Ascending aorta (tissue), 2 donors: ENCODE measurements at regions of chr19 and their contacts with region 1.

Region 1: GRCh38 chr19:47348819-47349795 is at the start of gene DHX34:
- DNase-seq: peak; percentile 94 to 99
- H3K4me3 ChIP-seq: peak within 1 kb of the TSS; percentile 80 to 90
- H3K27ac ChIP-seq: peak within 1 kb of the TSS; percentile 66 to 67
- H3K4me1 ChIP-seq: peaks cover 0 to 12% of the 10 kb centered on the region in 2 donors
- H3K27me3 ChIP-seq: no peaks in the 10 kb centered on the region
- CTCF ChIP-seq: peak; percentile 98 to 99 (median 98)
- total RNA-seq, gene DHX34: 8.0 TPM

Region 2: GRCh38 chr19:47089767-47090350 is 259.2 kb before region 1 on chr19:
- intact Hi-C with region 1: no loop called
- DNase-seq: no peak
- H3K4me3 ChIP-seq: no peak overlapping the region
- H3K27ac ChIP-seq: no peak overlapping the region
- H3K4me1 ChIP-seq: peaks cover under 1 to 3% of the 10 kb centered on the region in 2 donors
- H3K27me3 ChIP-seq: no peaks in the 10 kb centered on the region
- CTCF ChIP-seq: no peak

Region 3: DNA sequence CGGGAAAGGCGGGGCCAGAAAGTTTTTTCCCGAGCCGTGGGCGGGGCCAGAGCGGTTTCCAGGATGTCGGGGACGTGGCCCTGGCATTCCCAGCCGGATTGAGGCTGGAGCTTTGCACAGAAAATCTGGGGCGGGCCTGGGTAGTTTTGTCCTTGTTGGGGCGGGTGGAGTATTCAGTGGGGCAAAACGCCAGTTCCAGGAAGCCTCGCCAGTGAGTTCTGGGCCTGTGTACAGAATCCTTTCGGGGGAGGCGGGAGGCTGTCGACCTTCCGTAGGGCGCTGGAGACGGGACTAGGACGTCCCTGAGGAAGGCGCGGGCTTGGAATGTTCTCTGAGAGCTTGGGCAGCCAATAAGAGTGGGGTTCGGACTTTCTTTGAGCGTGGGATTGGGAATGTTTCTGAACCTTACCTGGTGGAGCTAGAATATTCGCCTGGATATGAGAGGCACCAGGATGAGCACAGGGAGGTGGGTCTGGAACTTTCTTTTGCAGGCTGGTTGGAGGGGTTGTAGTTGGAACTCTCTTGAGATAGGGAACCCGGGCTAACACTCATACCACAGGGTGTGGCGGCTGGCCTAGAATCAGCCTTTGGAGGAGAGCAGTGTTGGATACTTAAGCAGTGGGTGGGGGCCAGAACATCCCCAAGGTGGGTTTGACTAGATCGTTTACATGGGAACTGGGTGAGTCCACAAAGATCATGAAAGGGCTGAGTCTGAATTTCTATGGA is 91.5 kb before region 1 on chr19:
- intact Hi-C with region 1: no loop called
- DNase-seq: peak in 1 of 2 donors; percentile 79
- H3K4me3 ChIP-seq: peak overlapping the region; percentile 42 to 72
- H3K27ac ChIP-seq: peak overlapping the region; percentile 96 to 98
- H3K4me1 ChIP-seq: peaks cover 0 to 29% of the 10 kb centered on the region in 2 donors
- H3K27me3 ChIP-seq: no peaks in the 10 kb centered on the region
- CTCF ChIP-seq: no peak

Region 4: GRCh38 chr19:47305309-47305751 is 43.8 kb before region 1 on chr19:
- intact Hi-C with region 1: loop called (anchors 2 kb)
- DNase-seq: peak in 1 of 2 donors; percentile 90
- H3K4me3 ChIP-seq: no peak overlapping the region
- H3K27ac ChIP-seq: no peak overlapping the region
- H3K4me1 ChIP-seq: peaks cover 3 to 19% of the 10 kb centered on the region in 2 donors
- H3K27me3 ChIP-seq: no peaks in the 10 kb centered on the region
- CTCF ChIP-seq: peak; percentile 82 to 94 (median 91)

Region 5: GRCh38 chr19:47693493-47693892 is 344.4 kb after region 1 on chr19:
- intact Hi-C with region 1: no loop called
- DNase-seq: no peak
- H3K4me3 ChIP-seq: no peak overlapping the region
- H3K27ac ChIP-seq: no peak overlapping the region
- H3K4me1 ChIP-seq: no peaks in the 10 kb centered on the region
- H3K27me3 ChIP-seq: no peaks in the 10 kb centered on the region
- CTCF ChIP-seq: no peak

Region 6: GRCh38 chr19:47778089-47778953 is 429.2 kb after region 1 on chr19 and contains the start of gene SELENOW:
- intact Hi-C with region 1: no loop called
- DNase-seq: peak in 1 of 2 donors; percentile 76
- H3K4me3 ChIP-seq: peak within 1 kb of the TSS; percentile 81 to 94
- H3K27ac ChIP-seq: peak within 1 kb of the TSS; percentile 97 to 98
- H3K4me1 ChIP-seq: peaks cover 18 to 30% of the 10 kb centered on the region in 2 donors
- H3K27me3 ChIP-seq: no peaks in the 10 kb centered on the region
- CTCF ChIP-seq: no peak
- total RNA-seq, gene SELENOW: 771 TPM